Mammary epithelial cell (primary cell): ENCODE measurements at regions of chr7 and their contacts with region 1.

Region 1: DNA sequence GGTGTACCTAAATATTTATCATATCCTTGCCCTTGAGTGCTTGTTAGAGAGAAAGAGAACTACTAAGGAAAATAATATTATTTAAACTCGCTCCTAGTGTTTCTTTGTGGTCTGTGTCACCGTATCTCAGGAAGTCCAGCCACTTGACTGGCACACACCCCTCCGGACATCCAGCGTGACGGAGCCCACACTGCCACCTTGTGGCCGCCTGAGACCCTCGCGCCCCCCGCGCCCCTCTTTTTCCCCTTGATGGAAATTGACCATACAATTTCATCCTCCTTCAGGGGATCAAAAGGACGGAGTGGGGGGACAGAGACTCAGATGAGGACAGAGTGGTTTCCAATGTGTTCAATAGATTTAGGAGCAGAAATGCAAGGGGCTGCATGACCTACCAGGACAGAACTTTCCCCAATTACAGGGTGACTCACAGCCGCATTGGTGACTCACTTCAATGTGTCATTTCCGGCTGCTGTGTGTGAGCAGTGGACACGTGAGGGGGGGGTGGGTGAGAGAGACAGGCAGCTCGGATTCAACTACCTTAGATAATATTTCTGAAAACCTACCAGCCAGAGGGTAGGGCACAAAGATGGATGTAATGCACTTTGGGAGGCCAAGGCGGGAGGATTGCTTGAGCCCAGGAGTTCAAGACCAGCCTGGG is 11.4 kb downstream of the SERPINE1 start:
- DNase-seq: peak; percentile 96
- H3K4me3 ChIP-seq: no peak overlapping the region
- H3K27ac ChIP-seq: peak overlapping the region; percentile 55
- H3K4me1 ChIP-seq: peaks cover 52% of the 10 kb centered on the region
- H3K27me3 ChIP-seq: no peaks in the 10 kb centered on the region
- CTCF ChIP-seq: peak; percentile 34 to 59

Region 2: GRCh38 chr7:100889761-100890634 is 248.3 kb before region 1 on chr7:
- CTCF ChIA-PET with region 1: no interaction called
- dilution Hi-C with region 1: no loop called
- in situ Hi-C with region 1: no loop called
- intact Hi-C with region 1: loop called (anchors 2 kb)
- DNase-seq: peak; percentile 90
- H3K4me3 ChIP-seq: peak overlapping the region; percentile 50 to 79 (median 51)
- H3K27ac ChIP-seq: peak overlapping the region; percentile 29
- H3K4me1 ChIP-seq: peaks cover 36% of the 10 kb centered on the region
- H3K27me3 ChIP-seq: no peaks in the 10 kb centered on the region
- CTCF ChIP-seq: no peak

Region 3: GRCh38 chr7:101077303-101078089 is 60.8 kb before region 1 on chr7:
- CTCF ChIA-PET with region 1: no interaction called
- dilution Hi-C with region 1: no loop called
- in situ Hi-C with region 1: no loop called
- intact Hi-C with region 1: loop called (anchors 1 kb)
- DNase-seq: peak; percentile 82
- H3K4me3 ChIP-seq: no peak overlapping the region
- H3K27ac ChIP-seq: no peak overlapping the region
- H3K4me1 ChIP-seq: no peaks in the 10 kb centered on the region
- H3K27me3 ChIP-seq: peaks cover 2% of the 10 kb centered on the region
- CTCF ChIP-seq: peak; percentile 86 to 98

Region 4: DNA sequence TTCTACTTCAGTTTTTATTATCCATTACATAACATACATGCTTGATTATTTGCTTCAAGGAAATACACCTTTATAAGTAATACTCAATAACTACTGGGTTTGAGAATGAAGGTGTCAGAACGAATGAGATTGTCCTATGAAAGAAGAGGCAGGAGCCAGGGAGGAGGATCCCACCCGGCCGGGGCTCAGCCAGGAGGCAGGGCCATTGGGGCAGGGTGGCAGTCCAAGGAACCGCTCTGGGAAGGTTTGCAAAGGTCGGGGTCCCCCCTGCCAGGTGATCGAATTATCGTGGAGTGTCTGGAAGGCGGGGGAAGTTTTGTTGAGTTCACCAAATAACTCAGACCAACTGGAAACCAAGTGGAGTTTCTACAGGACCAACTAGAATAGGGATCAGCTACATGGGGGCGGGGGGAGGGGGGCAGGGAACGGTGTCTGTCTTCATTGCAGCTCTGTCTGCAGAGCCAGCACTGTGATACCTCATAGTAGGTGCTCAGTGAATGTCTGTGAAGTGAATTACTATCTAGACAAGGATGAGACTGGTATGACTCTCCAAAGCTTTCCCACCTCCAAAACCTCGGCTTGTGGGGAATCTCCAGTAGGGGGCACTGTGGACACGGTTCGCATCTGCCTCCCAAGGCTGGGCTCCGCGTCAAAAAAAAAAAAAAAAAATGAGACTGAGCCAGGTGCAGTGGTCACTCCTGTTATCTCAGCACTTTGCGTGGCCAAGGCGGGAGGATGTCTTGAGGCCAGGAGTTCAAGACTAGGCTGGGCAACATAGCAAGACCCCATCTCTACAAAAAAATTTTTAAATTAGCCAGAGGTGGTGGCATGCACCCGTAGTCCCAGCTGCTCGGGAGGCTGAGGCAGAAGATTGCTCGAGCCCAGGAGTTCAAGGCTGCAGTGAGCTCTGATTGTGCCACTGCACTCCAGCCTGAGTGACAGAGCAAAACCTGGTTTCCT is 43.6 kb before region 1 on chr7:
- CTCF ChIA-PET with region 1: no interaction called
- dilution Hi-C with region 1: no loop called
- in situ Hi-C with region 1: loop called in 1 of 2 experiments (anchors 5 kb)
- intact Hi-C with region 1: loop called (anchors 1 kb)
- DNase-seq: no peak
- H3K4me3 ChIP-seq: no peak overlapping the region
- H3K27ac ChIP-seq: peak overlapping the region; percentile 51
- H3K4me1 ChIP-seq: peaks cover 22% of the 10 kb centered on the region
- H3K27me3 ChIP-seq: no peaks in the 10 kb centered on the region
- CTCF ChIP-seq: peak; percentile 46 to 62

Region 5: GRCh38 chr7:101108962-101109759 is 29.2 kb before region 1 on chr7:
- CTCF ChIA-PET with region 1: interaction called, 12 read pairs
- dilution Hi-C with region 1: no loop called
- in situ Hi-C with region 1: no loop called
- intact Hi-C with region 1: no loop called
- DNase-seq: peak; percentile 98
- H3K4me3 ChIP-seq: no peak overlapping the region
- H3K27ac ChIP-seq: peak overlapping the region; percentile 87
- H3K4me1 ChIP-seq: peaks cover 23% of the 10 kb centered on the region
- H3K27me3 ChIP-seq: no peaks in the 10 kb centered on the region
- CTCF ChIP-seq: no peak

Region 6: GRCh38 chr7:101185258-101185839 is 47.0 kb after region 1 on chr7:
- CTCF ChIA-PET with region 1: no interaction called
- dilution Hi-C with region 1: no loop called
- in situ Hi-C with region 1: loop called (anchors 5 kb)
- intact Hi-C with region 1: no loop called
- DNase-seq: peak; percentile 43
- H3K4me3 ChIP-seq: no peak overlapping the region
- H3K27ac ChIP-seq: no peak overlapping the region
- H3K4me1 ChIP-seq: no peaks in the 10 kb centered on the region
- H3K27me3 ChIP-seq: peaks cover 5% of the 10 kb centered on the region
- CTCF ChIP-seq: no peak